H1 (cell line): ENCODE measurements at regions of chr6 and their contacts with region 1.

Region 1: GRCh38 chr6:26087284-26088115 is at the start of gene HFE:
- DNase-seq: peak in 1 of 2 experiments; percentile 73
- H3K4me3 ChIP-seq: peak within 1 kb of the TSS; percentile 48 to 65 (median 62)
- H3K27ac ChIP-seq: no peak within 1 kb of the TSS
- H3K4me1 ChIP-seq: peaks cover 0 to 5% (median 1%) of the 10 kb centered on the region in 4 experiments; a peak in 3 of 7 replicates
- H3K27me3 ChIP-seq: no peaks in the 10 kb centered on the region
- CTCF ChIP-seq: peak in 1 of 3 experiments; percentile 1; a peak in 1 of 4 replicates
- EP300 ChIP-seq: no peak
- POLR2A ChIP-seq: peak in 1 of 2 experiments; percentile 55; a peak in 1 of 3 replicates
- RAD21 ChIP-seq: no peak
- total RNA-seq, gene HFE: 1.6 and 2.0 TPM in 2 replicates

Region 2: DNA sequence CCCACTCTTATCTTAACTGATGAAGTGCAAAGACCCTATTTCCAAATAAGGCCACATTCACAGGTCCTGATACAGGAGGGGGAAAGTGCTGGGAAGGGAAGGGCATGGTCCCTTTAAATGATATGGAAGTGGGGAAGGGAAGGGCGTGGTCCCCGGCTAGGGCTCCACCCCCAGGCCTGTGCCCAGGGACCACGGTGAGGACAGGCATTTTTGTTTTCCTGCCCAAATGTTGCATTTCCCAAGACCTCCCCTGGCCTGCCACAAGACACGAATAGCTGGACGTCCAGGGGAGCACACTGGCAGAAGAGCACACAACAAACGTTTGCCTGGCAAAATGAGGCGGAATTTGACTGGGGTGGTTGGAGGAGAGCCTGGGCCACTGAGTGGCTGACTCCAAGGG is 16.4 kb before region 1 on chr6:
- CTCF ChIA-PET with region 1: interaction called, 481 read pairs
- POLR2A ChIA-PET with region 1: interaction called, 18 read pairs
- DNase-seq: no peak
- H3K4me3 ChIP-seq: no peak overlapping the region
- H3K27ac ChIP-seq: no peak overlapping the region
- H3K4me1 ChIP-seq: peaks cover 0 to 3% (median 0%) of the 10 kb centered on the region in 4 experiments; a peak in 2 of 7 replicates
- H3K27me3 ChIP-seq: no peaks in the 10 kb centered on the region
- CTCF ChIP-seq: no peak
- EP300 ChIP-seq: no peak
- POLR2A ChIP-seq: no peak
- RAD21 ChIP-seq: no peak

Region 3: GRCh38 chr6:26115226-26115625 is 27.7 kb after region 1 on chr6:
- CTCF ChIA-PET with region 1: no interaction called
- POLR2A ChIA-PET with region 1: no interaction called
- DNase-seq: no peak
- H3K4me3 ChIP-seq: no peak overlapping the region
- H3K27ac ChIP-seq: no peak overlapping the region
- H3K4me1 ChIP-seq: peaks cover 0 to 2% (median 0%) of the 10 kb centered on the region in 4 experiments; a peak in 2 of 7 replicates
- H3K27me3 ChIP-seq: no peaks in the 10 kb centered on the region
- CTCF ChIP-seq: no peak
- EP300 ChIP-seq: no peak
- POLR2A ChIP-seq: no peak
- RAD21 ChIP-seq: no peak